ENCODE measurements at regions of chr9 and their contacts with region 1.

Region 1: GRCh38 chr9:129202613-129203555 is 24.8 kb upstream of the IER5L start:
- DNase-seq: peak; percentile 93
- ATAC-seq: peak; percentile 98
- H3K4me3 Mint-ChIP-seq: peak overlapping the region; percentile 81
- H3K27ac Mint-ChIP-seq: peak overlapping the region; percentile 73
- H3K4me1 Mint-ChIP-seq: no peaks in the 10 kb centered on the region
- H3K27me3 Mint-ChIP-seq: peaks cover 6% of the 10 kb centered on the region
- CTCF ChIP-seq: no peak

Region 2: GRCh38 chr9:129584136-129584535 is 381.3 kb after region 1 on chr9:
- CTCF ChIA-PET with region 1: no interaction called
- POLR2A ChIA-PET with region 1: no interaction called
- intact Hi-C with region 1: loop called (anchors 1 kb)
- DNase-seq: no peak
- ATAC-seq: peak; percentile 74
- H3K4me3 Mint-ChIP-seq: no peak overlapping the region
- H3K27ac Mint-ChIP-seq: no peak overlapping the region
- H3K4me1 Mint-ChIP-seq: peaks cover 23% of the 10 kb centered on the region
- H3K27me3 Mint-ChIP-seq: peaks cover 9% of the 10 kb centered on the region
- CTCF ChIP-seq: no peak